GM13976 (cell line): ENCODE measurements at regions of chr4 and their contacts with region 1.

Region 1: GRCh38 chr4:153153339-153153871 is 50.8 kb upstream of the TRIM2 start:
- DNase-seq: peak; percentile 56
- CTCF ChIP-seq: no peak

Region 2: GRCh38 chr4:153318696-153319320 is 165.4 kb after region 1 on chr4:
- in situ Hi-C with region 1: loop called (anchors 5 kb)
- DNase-seq: peak; percentile 69
- CTCF ChIP-seq: peak; percentile 41

Region 3: GRCh38 chr4:153643406-153644383 is 490.3 kb after region 1 on chr4:
- in situ Hi-C with region 1: loop called (anchors 10 kb)
- DNase-seq: peak; percentile 76
- CTCF ChIP-seq: peak; percentile 47